Mammary epithelial cell (primary cell): ENCODE measurements at regions of chr1 and their contacts with region 1.

Region 1: GRCh38 chr1:179365320-179366092 is at the start of gene AXDND1:
- DNase-seq: peak; percentile 73
- H3K4me3 ChIP-seq: peak within 1 kb of the TSS; percentile 57 to 82 (median 70)
- H3K27ac ChIP-seq: peak within 1 kb of the TSS; percentile 92
- H3K4me1 ChIP-seq: peaks cover 4% of the 10 kb centered on the region
- H3K27me3 ChIP-seq: no peaks in the 10 kb centered on the region
- CTCF ChIP-seq: peak in 1 of 2 donors; percentile 38
- total RNA-seq, gene AXDND1: 0.67 to 1.3 TPM

Region 2: GRCh38 chr1:178532392-178532791 is 833.1 kb before region 1 on chr1:
- CTCF ChIA-PET with region 1: no interaction called
- dilution Hi-C with region 1: no loop called
- in situ Hi-C with region 1: loop called in 1 of 2 experiments (anchors 25 kb)
- intact Hi-C with region 1: loop called (anchors 1 kb)
- DNase-seq: peak; percentile 58
- H3K4me3 ChIP-seq: no peak overlapping the region
- H3K27ac ChIP-seq: no peak overlapping the region
- H3K4me1 ChIP-seq: peaks cover 31% of the 10 kb centered on the region
- H3K27me3 ChIP-seq: no peaks in the 10 kb centered on the region
- CTCF ChIP-seq: peak; percentile 89 to 92

Region 3: DNA sequence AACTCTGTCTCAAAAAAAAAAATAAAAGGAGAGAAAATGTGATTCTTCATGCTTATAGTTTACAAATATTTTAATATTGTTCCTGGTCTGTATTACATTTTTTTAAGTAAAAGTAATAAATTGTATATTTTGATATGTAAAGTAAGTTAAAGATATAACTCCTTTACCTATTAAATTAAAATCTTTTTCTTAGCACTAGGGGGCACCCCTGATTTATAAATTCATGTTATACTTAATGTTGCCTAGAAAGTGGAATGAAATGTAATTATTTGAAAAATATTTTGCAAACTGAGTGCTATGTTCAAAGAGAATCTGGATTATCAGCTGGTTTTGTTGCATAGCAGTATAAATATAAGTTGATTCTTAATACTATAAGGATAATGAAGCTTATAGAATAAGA is 591.2 kb before region 1 on chr1:
- CTCF ChIA-PET with region 1: no interaction called
- dilution Hi-C with region 1: no loop called
- in situ Hi-C with region 1: no loop called
- intact Hi-C with region 1: loop called (anchors 5 kb)
- DNase-seq: no peak
- H3K4me3 ChIP-seq: no peak overlapping the region
- H3K27ac ChIP-seq: no peak overlapping the region
- H3K4me1 ChIP-seq: no peaks in the 10 kb centered on the region
- H3K27me3 ChIP-seq: no peaks in the 10 kb centered on the region
- CTCF ChIP-seq: peak; percentile 34 to 39

Region 4: DNA sequence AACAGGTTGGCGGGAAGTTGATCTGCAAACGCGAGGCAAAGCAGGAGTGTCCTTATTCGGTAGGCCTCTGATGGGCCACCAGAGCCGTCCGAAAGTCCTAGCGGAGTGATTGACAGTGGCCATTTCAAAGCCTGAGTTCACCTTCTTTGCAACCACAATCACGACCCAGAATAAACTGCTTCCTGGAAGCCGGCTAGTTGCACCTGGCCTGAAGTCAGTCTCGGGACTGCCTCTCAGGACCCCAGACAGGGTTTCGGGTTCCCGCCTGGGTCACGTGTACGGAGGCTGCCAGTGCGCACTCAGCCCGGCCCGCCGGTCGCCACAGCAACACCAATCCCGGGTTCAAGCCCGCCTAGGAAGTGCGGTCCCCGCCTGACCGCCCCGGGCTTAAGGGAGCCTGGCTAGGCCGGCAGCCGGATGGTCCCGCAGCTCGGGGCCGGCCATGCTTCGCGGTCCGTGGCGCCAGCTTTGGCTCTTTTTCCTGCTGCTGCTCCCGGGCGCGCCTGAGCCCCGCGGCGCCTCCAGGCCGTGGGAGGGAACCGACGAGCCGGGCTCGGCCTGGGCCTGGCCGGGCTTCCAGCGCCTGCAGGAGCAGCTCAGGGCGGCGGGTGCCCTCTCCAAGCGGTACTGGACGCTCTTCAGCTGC is 283.7 kb before region 1 on chr1 and contains the start of gene TOR3A:
- CTCF ChIA-PET with region 1: no interaction called
- dilution Hi-C with region 1: no loop called
- in situ Hi-C with region 1: loop called (anchors 10 to 25 kb)
- intact Hi-C with region 1: loop called (anchors 1 kb)
- DNase-seq: peak; percentile 89
- H3K4me3 ChIP-seq: peak within 1 kb of the TSS; percentile 56 to 91 (median 84)
- H3K27ac ChIP-seq: peak within 1 kb of the TSS; percentile 50
- H3K4me1 ChIP-seq: peaks cover 5% of the 10 kb centered on the region
- H3K27me3 ChIP-seq: no peaks in the 10 kb centered on the region
- CTCF ChIP-seq: no peak
- total RNA-seq, gene TOR3A: 33.5 to 38.0 TPM

Region 5: DNA sequence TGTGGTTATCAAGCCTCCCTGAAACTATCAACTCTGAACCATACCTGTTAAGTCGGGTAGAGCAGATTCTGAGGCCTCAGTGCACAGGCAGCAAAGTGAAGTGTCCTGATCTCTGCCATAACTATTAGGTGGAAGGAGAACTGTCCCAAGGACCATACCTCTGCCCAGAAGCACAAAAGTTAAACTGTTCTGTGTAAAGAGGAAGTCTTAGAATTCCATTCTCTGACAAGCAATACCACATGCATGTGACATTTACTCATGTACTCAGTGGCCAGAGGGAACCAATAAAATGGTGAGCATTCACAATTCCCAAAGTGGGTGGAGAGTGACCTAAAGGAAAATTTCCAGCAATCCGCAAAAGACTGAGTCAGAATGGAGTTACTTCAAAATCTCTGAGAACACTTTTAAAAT is 222.6 kb before region 1 on chr1:
- CTCF ChIA-PET with region 1: no interaction called
- dilution Hi-C with region 1: no loop called
- in situ Hi-C with region 1: no loop called
- intact Hi-C with region 1: loop called (anchors 1 kb)
- DNase-seq: peak; percentile 97
- H3K4me3 ChIP-seq: peak overlapping the region; percentile 68 to 100 (median 82)
- H3K27ac ChIP-seq: peak overlapping the region; percentile 100
- H3K4me1 ChIP-seq: peaks cover 30% of the 10 kb centered on the region
- H3K27me3 ChIP-seq: no peaks in the 10 kb centered on the region
- CTCF ChIP-seq: no peak

Region 6: DNA sequence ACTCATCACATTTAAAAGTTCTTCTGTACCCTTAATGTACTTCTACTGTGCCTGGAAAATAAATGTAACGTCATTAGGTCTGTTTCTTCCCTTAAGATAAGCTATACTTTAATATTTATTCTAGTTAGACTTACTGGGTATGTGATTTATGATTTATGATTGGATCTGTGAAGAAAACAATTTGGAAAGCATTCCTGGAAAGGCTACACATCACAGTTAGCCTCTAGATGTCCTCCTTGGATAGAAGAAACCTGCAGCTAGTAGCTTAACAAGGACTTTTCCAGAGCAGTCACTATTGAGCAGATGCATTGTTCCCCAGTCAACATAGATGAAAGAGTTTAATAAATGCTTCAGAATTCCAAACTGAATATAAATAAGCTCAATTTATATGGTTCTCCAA is 113.8 kb before region 1 on chr1:
- CTCF ChIA-PET with region 1: no interaction called
- dilution Hi-C with region 1: no loop called
- in situ Hi-C with region 1: loop called (anchors 5 to 10 kb)
- intact Hi-C with region 1: loop called (anchors 1 kb)
- DNase-seq: peak; percentile 25
- H3K4me3 ChIP-seq: no peak overlapping the region
- H3K27ac ChIP-seq: no peak overlapping the region
- H3K4me1 ChIP-seq: no peaks in the 10 kb centered on the region
- H3K27me3 ChIP-seq: no peaks in the 10 kb centered on the region
- CTCF ChIP-seq: peak; percentile 32 to 64

Region 7: GRCh38 chr1:179425186-179425585 is 59.7 kb after region 1 on chr1:
- CTCF ChIA-PET with region 1: no interaction called
- dilution Hi-C with region 1: no loop called
- in situ Hi-C with region 1: no loop called
- intact Hi-C with region 1: no loop called
- DNase-seq: no peak
- H3K4me3 ChIP-seq: no peak overlapping the region
- H3K27ac ChIP-seq: no peak overlapping the region
- H3K4me1 ChIP-seq: no peaks in the 10 kb centered on the region
- H3K27me3 ChIP-seq: peaks cover 2% of the 10 kb centered on the region
- CTCF ChIP-seq: no peak

Region 8: GRCh38 chr1:179476484-179476883 is 111.0 kb after region 1 on chr1:
- CTCF ChIA-PET with region 1: no interaction called
- dilution Hi-C with region 1: no loop called
- in situ Hi-C with region 1: no loop called
- intact Hi-C with region 1: no loop called
- DNase-seq: no peak
- H3K4me3 ChIP-seq: no peak overlapping the region
- H3K27ac ChIP-seq: no peak overlapping the region
- H3K4me1 ChIP-seq: no peaks in the 10 kb centered on the region
- H3K27me3 ChIP-seq: no peaks in the 10 kb centered on the region
- CTCF ChIP-seq: no peak

Region 9: GRCh38 chr1:179599623-179600249 is 234.2 kb after region 1 on chr1:
- CTCF ChIA-PET with region 1: no interaction called
- dilution Hi-C with region 1: no loop called
- in situ Hi-C with region 1: no loop called
- intact Hi-C with region 1: loop called (anchors 10 kb)
- DNase-seq: peak; percentile 32
- H3K4me3 ChIP-seq: no peak overlapping the region
- H3K27ac ChIP-seq: no peak overlapping the region
- H3K4me1 ChIP-seq: no peaks in the 10 kb centered on the region
- H3K27me3 ChIP-seq: peaks cover 3% of the 10 kb centered on the region
- CTCF ChIP-seq: peak; percentile 50 to 53